Dorsolateral prefrontal cortex (tissue), 120 donors: ENCODE measurements at regions of chr20 and their contacts with region 1.

Region 1: DNA sequence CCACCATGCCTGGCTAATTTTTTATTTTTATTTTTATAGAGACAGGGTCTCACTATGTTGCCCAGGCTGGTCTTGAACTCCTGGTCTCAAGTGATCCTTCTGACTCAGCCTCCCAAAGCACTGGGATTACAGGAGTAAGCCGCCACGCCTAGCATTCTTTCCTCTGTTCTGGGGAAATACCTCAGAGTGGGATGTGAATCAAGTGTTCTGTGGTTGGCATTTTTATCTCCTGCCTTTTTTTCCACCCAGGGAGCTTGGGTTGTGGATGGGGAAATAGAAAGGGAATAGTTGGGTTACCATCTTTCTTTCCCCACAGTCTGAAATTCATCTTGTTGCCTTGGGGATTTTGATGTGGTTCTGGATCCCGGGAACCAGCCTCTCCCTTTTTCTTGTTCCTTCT is 24.1 kb downstream of the TFAP2C start:
- DNase-seq: no peak
- H3K4me3 ChIP-seq: no peak overlapping the region
- H3K27ac ChIP-seq: no peak overlapping the region
- H3K27me3 ChIP-seq: peaks cover 0 to 14% (median 0%) of the 10 kb centered on the region in 45 donors
- CTCF ChIP-seq: no peak

Region 2: GRCh38 chr20:56271974-56272373 is 381.2 kb before region 1 on chr20:
- intact Hi-C with region 1: loop called in 1 of 2 experiments (anchors 5 kb)
- DNase-seq: no peak
- H3K4me3 ChIP-seq: no peak overlapping the region
- H3K27ac ChIP-seq: no peak overlapping the region
- H3K27me3 ChIP-seq: peaks cover 0 to 15% (median 0%) of the 10 kb centered on the region in 45 donors
- CTCF ChIP-seq: no peak

Region 3: GRCh38 chr20:56735191-56735711 is 82.0 kb after region 1 on chr20:
- intact Hi-C with region 1: no loop called
- DNase-seq: peak in 1 of 10 donors; percentile 10
- H3K4me3 ChIP-seq: no peak overlapping the region
- H3K27ac ChIP-seq: no peak overlapping the region
- H3K27me3 ChIP-seq: peaks cover 0 to 18% (median 0%) of the 10 kb centered on the region in 45 donors
- CTCF ChIP-seq: no peak